KBM-7 (cell line): ENCODE measurements at regions of chr7 and their contacts with region 1.

Region 1: DNA sequence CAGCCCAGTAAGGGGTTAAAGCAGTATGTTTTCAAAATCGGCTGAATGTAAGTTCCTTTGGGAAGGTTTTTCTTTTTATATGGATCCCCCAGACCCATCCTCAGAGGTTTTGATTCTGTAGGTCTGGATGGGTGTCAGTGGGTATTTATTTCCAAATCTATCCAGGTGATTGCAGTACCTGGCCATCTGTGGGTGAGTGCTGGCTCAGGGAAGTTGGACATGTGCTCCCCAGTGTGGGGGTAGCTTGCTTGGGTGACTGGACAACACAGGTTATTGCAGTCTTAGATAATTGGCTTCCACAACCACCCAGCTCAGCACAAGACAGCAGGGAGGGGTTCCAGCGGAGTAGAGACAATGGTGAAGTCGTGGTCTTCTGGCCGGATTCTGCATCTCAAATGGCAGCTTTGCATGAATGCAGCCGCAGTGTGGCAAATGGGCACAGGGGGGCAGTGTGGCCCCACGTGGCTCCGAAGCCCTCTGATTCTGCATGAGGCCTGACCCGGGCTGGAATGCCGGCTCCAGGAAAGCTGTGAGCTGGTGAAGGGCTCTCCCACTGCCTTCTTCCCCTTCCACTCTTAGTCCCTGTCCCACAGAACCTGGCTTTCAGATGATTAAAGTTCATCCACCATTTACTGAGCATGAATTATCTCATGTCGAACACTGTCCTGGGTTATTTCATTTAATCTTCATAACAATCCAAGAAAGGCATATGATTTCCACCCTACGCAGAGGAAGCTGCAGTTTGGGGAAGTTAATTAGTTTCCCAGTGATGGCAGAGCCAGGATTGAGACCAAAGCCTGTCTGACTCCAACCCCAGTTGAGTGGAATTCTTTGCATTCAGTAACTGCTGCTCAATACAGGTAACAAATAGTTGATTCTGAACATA is 64.5 kb upstream of the SYPL1 start:
- DNase-seq: peak; percentile 84

Region 2: GRCh38 chr7:105003275-105003674 is 1173.4 kb before region 1 on chr7:
- in situ Hi-C with region 1: no loop called
- DNase-seq: no peak

Region 3: DNA sequence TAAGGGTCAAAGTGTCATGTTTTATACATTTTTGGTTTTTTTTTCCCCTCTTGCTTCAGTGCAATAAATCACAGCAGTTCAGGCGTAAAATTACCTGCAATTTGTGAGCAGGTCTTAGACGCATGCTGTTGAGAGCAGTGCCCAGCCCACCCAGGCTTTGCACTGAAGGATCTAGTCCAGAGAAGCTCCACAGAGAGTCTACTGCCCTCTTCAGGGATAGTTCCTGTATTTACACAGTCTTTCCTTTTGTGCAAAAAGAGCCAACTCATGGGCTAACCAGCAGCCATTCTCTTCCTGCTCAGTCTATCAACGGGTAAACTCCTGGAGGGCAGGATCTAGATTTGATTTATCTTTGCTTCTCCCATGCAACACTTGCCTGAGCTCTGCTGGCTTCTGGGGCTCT is 190.4 kb after region 1 on chr7:
- in situ Hi-C with region 1: loop called (anchors 25 kb)
- DNase-seq: peak; percentile 58

Region 4: DNA sequence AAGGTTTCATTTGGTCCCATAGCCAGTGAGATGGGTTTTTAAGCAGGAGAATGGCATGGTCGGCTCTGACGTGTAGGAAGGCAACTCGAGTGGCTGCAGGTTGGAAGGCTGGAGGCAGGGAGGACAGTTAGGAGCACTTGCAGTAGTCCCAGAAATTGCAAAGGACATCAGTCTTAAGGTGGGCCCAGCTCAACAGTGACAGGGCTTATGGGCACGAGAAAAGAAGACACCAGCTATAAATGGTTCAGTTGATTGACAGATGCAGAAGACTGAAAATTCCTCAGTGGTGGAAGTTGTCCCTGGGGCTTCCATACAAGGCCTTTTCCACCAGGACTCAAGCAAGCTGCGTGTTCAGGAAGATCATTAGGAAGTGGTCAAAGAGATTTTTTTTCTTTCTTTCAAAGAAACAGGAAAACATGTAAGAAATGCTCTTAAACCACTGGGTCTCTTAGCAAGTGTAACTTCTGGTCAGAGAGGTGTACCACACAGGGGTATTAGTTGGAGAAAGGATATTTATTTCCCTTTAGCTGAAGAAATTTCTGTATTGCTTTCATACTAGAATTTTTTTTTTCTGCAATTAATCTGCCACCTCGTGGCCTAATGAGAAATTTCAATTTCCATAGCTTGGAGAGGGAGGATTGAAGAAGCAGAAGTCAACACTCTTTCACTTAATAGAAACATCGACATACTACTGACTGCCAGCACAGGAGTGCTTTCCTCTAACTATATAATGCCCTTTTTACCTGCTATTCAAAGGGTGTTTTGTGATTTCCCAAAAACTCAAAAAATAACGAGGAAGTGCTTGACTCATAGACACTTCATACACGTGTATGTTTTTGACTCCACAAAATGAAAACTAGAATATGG is 285.6 kb after region 1 on chr7:
- in situ Hi-C with region 1: loop called (anchors 10 kb)
- DNase-seq: peak; percentile 86

Region 5: GRCh38 chr7:106870983-106871410 is 694.3 kb after region 1 on chr7:
- in situ Hi-C with region 1: no loop called
- DNase-seq: peak; percentile 33